Dendritic cell treated with granulocyte-macrophage colony-stimulating factor and Interleukin-4, amounts not matched to agents 40 ng/mL and 50 ng/mL, for 4 days (primary cell): ENCODE measurements at regions of chr19 and their contacts with region 1.

Region 1: GRCh38 chr19:5048091-5048726 is 79.3 kb downstream of the KDM4B start:
- H3K4me3 Mint-ChIP-seq: no peak overlapping the region
- H3K27ac Mint-ChIP-seq: no peak overlapping the region
- H3K4me1 Mint-ChIP-seq: peaks cover 8% of the 10 kb centered on the region
- H3K27me3 Mint-ChIP-seq: no peaks in the 10 kb centered on the region

Region 2: DNA sequence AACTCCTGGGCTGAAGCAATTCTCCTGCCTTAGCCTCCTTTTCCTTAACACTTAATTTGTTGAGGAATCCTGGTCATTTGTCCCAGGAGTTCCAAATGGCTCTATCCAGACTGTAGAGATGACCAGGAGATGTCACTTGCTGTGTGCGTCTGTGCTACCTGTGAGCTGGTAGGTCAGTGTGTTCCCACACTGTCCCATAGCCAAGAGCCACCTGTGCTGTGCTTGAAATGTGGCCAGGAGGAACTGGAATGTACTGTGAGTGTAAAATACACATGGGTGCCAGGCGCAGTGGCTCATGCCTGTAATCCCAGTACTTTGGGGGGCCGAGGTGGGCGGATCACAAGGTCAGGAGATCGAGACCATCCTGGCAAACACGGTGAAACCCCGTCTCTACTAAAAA is 108.7 kb before region 1 on chr19:
- intact Hi-C with region 1: no loop called
- H3K4me3 Mint-ChIP-seq: no peak overlapping the region
- H3K27ac Mint-ChIP-seq: no peak overlapping the region
- H3K4me1 Mint-ChIP-seq: no peaks in the 10 kb centered on the region
- H3K27me3 Mint-ChIP-seq: no peaks in the 10 kb centered on the region

Region 3: GRCh38 chr19:5138606-5139582 is 90.7 kb after region 1 on chr19:
- intact Hi-C with region 1: loop called (anchors 10 kb)
- H3K4me3 Mint-ChIP-seq: peak overlapping the region; percentile 23
- H3K27ac Mint-ChIP-seq: peak overlapping the region; percentile 22
- H3K4me1 Mint-ChIP-seq: peaks cover 38% of the 10 kb centered on the region
- H3K27me3 Mint-ChIP-seq: peaks cover 2% of the 10 kb centered on the region

Region 4: GRCh38 chr19:5170329-5170745 is 122.1 kb after region 1 on chr19:
- intact Hi-C with region 1: loop called (anchors 10 kb)
- H3K4me3 Mint-ChIP-seq: no peak overlapping the region
- H3K27ac Mint-ChIP-seq: no peak overlapping the region
- H3K4me1 Mint-ChIP-seq: no peaks in the 10 kb centered on the region
- H3K27me3 Mint-ChIP-seq: peaks cover 20% of the 10 kb centered on the region